Gastrocnemius medialis (tissue), 4 donors: ENCODE measurements at regions of chr6 and their contacts with region 1.

Region 1: GRCh38 chr6:148192310-148192709 is 150.3 kb upstream of the SASH1 start:
- DNase-seq: peak in 1 of 2 donors; percentile 3
- ATAC-seq: peak; percentile 41 to 80
- H3K4me3 ChIP-seq: no peak overlapping the region
- H3K27ac ChIP-seq: peak overlapping the region in 1 of 4 donors; percentile 56
- H3K4me1 ChIP-seq: peaks cover 0 to 11% of the 10 kb centered on the region in 2 donors
- H3K27me3 ChIP-seq: no peaks in the 10 kb centered on the region
- CTCF ChIP-seq: no peak
- POLR2A ChIP-seq: no peak

Region 2: DNA sequence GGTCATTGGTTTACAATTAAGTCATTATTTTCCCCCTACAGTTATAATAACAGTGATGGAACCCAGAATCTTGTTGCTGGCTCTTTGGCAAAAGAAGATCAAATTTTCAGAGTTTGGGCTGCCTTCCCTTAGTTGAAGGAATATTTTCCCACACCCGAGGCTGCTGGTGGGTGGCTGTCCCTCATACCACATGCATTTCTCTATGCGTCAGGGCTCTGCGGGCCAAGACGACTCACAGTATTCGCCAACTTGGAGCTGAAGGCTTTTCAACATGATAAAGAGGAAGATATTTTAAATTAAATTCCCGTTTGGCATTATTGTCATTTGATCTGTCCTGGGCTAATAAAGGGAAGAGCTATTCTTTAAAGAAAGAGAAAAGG is 48.1 kb after region 1 on chr6:
- in situ Hi-C with region 1: no loop called
- intact Hi-C with region 1: loop called (anchors 5 kb)
- DNase-seq: no peak
- ATAC-seq: no peak
- H3K4me3 ChIP-seq: no peak overlapping the region
- H3K27ac ChIP-seq: peak overlapping the region; percentile 23 to 53 (median 34)
- H3K4me1 ChIP-seq: peaks cover 13 to 32% of the 10 kb centered on the region in 2 donors
- H3K27me3 ChIP-seq: no peaks in the 10 kb centered on the region
- CTCF ChIP-seq: no peak
- POLR2A ChIP-seq: no peak